ENCODE measurements at regions of chr15 and their contacts with region 1.

Region 1: DNA sequence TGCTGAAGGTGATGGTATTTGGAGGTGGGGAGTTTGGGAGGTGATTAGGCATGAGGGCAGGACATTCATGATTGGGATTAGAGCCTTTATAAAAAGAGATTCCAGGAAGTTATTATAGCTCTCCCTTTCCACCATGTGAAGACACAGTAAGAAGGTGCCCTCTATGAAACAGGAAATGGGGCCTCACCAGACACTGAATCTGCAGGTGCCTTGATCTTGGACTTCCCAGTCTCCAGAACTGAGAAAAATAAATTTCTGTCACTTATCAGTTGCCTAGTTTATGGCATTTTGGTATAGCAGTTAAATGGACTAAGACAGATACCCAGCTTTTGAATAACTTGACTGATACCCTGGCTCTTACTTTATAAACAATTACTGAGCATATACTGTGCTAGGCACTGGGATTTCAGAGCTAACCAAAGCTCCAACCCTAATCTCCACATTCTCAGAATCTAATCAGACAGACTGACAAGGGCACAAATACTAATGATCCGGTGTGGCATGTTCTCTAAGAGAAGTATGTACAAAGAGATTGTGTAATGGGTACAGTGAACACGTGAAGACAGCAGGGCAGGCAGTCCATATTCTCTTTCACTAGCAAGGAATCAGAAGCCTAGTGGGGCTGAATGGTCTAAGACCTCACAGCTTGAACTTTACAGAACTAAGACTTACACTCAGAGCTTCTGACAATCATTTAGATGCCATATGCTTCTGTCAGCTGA is 343.1 kb downstream of the WDR72 start:
- DNase-seq: no peak
- ATAC-seq: no peak

Region 2: DNA sequence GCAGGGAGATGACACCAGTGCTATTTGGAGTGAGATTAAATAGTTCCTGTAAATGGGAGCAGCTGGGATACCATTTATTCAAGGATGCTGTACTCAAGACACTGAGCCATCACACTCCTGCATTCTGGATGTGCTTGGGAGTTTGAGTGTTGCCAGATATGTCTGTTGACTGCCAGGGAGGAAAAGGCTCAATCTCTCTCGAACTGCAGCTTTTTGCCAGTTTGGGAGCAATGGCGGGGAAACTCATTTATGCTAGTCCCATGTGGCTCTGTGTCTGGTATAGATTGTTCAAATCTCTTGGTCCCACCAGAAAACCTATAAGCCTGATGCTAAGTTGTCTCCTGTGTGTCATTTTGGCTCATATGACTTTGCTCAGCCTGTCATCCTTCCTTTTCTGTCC is 20.5 kb before region 1 on chr15:
- intact Hi-C with region 1: loop called (anchors 2 kb)
- DNase-seq: no peak
- ATAC-seq: no peak